Activated CD4-positive, alpha-beta T cell treated with anti-CD3 and anti-CD28 coated beads, Interleukin-2, amount 10 ng/mL, durations not matched to agents 7 days and 5 days (primary cell): ENCODE measurements at regions of chr19 and their contacts with region 1.

Region 1: DNA sequence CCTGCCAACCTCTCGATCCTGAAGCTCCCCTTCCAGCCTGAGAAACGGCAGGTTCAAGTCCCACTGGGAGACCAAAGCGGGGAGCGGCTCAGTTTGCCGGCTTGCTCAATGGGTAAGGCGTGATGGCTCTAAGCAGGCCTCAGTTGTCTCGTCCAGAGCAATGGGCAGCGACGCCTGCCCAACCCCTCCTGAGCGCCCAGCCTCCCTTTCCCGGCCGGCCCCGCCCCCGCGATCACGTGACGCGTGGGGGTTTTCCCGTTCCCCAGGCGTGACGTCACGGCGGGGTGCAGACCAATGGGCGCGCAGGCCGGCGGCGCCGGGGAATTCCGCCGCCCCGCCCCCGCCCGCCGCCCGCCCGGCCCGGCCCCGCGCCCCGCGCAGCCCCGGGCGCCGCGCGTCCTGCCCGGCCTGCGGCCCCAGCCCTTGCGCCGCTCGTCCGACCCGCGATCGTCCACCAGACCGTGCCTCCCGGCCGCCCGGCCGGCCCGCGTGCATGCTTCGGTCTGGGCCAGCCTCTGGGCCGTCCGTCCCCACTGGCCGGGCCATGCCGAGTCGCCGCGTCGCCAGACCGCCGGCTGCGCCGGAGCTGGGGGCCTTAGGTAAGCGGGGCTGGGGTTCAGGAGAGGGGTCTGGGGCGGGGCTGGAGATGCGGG is at the start of gene RELB:
- DNase-seq: peak; percentile 93
- H3K4me3 Mint-ChIP-seq: peak within 1 kb of the TSS; percentile 96
- H3K27ac Mint-ChIP-seq: peak within 1 kb of the TSS; percentile 100
- H3K4me1 Mint-ChIP-seq: peaks cover 24% of the 10 kb centered on the region
- H3K27me3 Mint-ChIP-seq: no peaks in the 10 kb centered on the region
- total RNA-seq, gene RELB: 16.8 to 20.0 TPM

Region 2: DNA sequence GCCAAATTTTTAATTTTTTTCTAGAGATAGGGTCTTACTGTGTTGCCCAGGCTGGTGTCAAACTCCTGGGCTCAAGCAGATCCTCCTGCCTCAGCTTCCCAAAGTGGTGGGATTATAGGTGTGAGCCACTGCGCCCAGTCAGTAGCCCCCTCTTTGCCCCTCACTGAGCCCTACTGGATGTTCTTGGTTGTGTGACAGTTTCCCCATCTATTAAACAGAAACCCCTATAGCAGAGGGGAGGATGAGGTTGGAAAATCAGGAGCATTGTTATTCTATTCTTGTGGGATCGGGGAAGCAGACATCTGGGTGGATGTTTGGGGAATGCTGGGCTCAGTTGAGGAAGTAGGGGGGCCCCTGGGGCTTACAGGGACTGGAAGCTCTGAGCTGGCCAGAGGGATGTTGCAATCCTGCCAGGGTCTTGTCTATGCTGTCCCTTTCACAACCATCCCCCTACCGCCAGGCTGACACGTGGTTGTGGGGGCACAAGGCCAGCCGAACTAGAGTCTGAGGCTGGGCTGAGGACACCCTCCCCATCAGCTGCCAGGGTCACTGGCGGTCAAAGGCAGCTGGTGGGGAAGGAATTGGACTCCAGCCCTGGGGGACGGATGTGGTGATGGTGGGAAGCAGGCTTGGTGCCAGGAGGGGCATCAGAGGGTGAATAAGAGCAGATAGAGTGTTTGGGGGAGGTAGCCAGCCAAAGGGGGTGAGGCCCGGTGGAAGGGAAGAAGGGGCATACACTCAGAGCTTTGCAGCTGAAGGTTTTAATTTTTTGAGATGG is 75.9 kb before region 1 on chr19:
- CTCF ChIA-PET with region 1: no interaction called
- POLR2A ChIA-PET with region 1: no interaction called
- DNase-seq: no peak
- H3K4me3 Mint-ChIP-seq: no peak overlapping the region
- H3K27ac Mint-ChIP-seq: no peak overlapping the region
- H3K4me1 Mint-ChIP-seq: peaks cover 4% of the 10 kb centered on the region
- H3K27me3 Mint-ChIP-seq: peaks cover 9% of the 10 kb centered on the region

Region 3: GRCh38 chr19:44988896-44989556 is 12.2 kb before region 1 on chr19:
- CTCF ChIA-PET with region 1: interaction called, 10 read pairs
- POLR2A ChIA-PET with region 1: no interaction called
- DNase-seq: peak; percentile 72
- H3K4me3 Mint-ChIP-seq: no peak overlapping the region
- H3K27ac Mint-ChIP-seq: no peak overlapping the region
- H3K4me1 Mint-ChIP-seq: no peaks in the 10 kb centered on the region
- H3K27me3 Mint-ChIP-seq: no peaks in the 10 kb centered on the region

Region 4: DNA sequence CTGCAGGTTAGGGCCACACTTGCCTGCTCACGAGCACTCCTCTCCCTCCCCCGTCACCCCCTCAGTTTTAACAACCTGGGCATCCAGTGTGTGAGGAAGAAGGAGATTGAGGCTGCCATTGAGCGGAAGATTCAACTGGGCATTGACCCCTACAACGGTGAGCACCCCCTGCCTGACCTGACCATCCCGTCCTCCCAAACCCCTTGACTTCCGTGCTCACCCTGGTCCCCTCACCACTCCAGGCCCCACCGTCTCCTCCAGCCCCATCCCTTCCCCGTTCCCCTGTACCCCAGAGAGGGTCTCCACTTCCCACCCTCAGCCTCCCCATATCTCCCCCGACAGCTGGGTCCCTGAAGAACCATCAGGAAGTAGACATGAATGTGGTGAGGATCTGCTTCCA is 24.1 kb after region 1 on chr19:
- CTCF ChIA-PET with region 1: interaction called, 12 read pairs
- POLR2A ChIA-PET with region 1: no interaction called
- DNase-seq: no peak
- H3K4me3 Mint-ChIP-seq: no peak overlapping the region
- H3K27ac Mint-ChIP-seq: no peak overlapping the region
- H3K4me1 Mint-ChIP-seq: no peaks in the 10 kb centered on the region
- H3K27me3 Mint-ChIP-seq: no peaks in the 10 kb centered on the region